ENCODE measurements at regions of chr2 and their contacts with region 1.

Region 1: GRCh38 chr2:168954256-168954655 is 53.2 kb downstream of the G6PC2 start:
- DNase-seq: no peak
- H3K4me3 ChIP-seq: no peak overlapping the region
- H3K27ac ChIP-seq: no peak overlapping the region
- H3K4me1 ChIP-seq: no peaks in the 10 kb centered on the region
- H3K27me3 ChIP-seq: no peaks in the 10 kb centered on the region
- CTCF ChIP-seq: no peak

Region 2: DNA sequence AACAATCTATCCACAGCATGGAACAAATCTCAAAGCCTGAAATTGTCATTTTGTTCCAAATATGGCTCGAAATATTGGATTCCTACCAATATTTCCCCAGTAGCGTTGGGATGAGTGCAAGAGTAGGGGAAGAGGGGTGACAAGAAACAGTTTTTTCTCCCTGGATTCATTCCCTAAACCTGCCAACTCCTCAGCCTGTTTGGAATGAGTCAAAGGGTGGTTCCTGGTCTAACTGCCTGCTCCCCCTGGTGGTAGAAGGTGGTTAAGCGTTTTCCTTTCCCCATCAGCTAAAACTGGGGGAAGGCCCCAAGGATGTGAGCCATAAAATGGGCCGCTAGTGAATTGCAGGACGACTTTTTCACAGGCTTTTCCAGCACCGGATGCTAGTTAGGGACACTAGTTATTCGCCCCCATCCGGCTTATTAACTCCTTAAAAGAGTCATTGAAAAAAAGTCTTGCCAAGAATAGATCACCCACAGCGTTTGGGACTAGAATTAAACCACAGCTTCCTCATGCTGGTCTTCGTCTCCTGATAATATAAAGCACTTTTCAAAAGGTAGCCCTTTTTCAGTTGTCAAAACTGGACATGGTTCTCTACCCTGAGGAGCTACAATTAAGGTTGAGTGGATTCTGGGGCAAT is 187.6 kb after region 1 on chr2:
- intact Hi-C with region 1: loop called (anchors 5 kb)
- DNase-seq: peak; percentile 75
- H3K4me3 ChIP-seq: no peak overlapping the region
- H3K27ac ChIP-seq: no peak overlapping the region
- H3K4me1 ChIP-seq: no peaks in the 10 kb centered on the region
- H3K27me3 ChIP-seq: no peaks in the 10 kb centered on the region
- CTCF ChIP-seq: peak; percentile 77